CD4-positive, alpha-beta T cell (primary cell): ENCODE measurements at regions of chr19 and their contacts with region 1.

Region 1: GRCh38 chr19:49877020-49877878 is at the starts of genes AKT1S1 and TBC1D17:
- DNase-seq: peak; percentile 95 to 100 (median 98)
- ATAC-seq: peak; percentile 60
- H3K4me3 ChIP-seq: peak within 1 kb of the TSS; percentile 88
- H3K4me3 Mint-ChIP-seq: no peak within 1 kb of the TSS
- H3K27ac ChIP-seq: peak within 1 kb of the TSS; percentile 98 to 100
- H3K27ac Mint-ChIP-seq: no peak within 1 kb of the TSS
- H3K4me1 ChIP-seq: peaks cover 35% of the 10 kb centered on the region
- H3K4me1 Mint-ChIP-seq: peaks cover 18% of the 10 kb centered on the region
- H3K27me3 ChIP-seq: no peaks in the 10 kb centered on the region
- H3K27me3 Mint-ChIP-seq: no peaks in the 10 kb centered on the region
- CTCF ChIP-seq: no peak
- total RNA-seq, gene AKT1S1: 15.1 to 15.8 TPM
- total RNA-seq, gene TBC1D17: 35.5 to 35.8 TPM

Region 2: DNA sequence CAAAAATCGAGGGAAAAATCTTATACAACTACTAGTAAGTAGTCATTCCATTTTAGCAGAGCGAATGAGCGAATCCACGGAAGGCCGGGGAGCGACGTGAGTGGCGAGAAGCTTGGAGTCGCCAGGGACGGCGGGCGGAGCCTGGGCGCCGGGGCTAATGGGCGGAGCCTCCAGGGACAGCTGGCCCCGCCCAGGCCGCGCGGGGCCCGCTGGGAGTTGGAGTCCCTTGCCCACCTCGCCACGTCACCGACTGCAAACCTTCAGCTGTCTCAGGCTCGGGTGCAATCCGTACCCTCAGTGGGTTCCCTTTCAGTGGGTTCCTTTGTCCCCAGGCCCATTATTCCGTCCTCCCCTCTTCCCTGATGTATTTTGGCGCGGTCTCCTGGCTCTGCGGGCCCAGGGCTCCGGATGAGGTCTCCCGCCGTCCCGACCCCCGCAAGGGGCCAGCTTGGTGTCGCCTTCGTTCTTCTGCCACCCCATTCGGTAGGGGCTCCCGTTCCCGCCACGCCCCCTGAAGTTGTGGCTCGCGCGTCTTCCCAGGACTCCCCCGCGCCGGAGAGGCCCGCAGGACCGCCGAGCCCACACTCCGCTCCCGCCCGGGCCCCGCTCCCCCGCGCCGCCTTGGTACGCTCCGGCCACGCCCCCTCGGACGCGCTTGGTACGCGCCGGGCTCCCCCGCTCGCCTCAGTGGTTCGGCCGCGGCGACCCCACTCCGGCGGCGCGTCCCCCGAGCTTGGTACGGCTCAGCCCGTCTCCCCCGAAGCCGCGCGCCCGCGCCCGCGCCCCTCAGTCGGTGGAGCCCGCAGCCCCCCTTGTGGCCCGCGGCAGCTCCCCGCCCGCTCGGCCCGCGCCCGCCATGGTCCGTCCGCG is 26.5 kb before region 1 on chr19 and contains the start of gene PTOV1:
- CTCF ChIA-PET with region 1: no interaction called
- POLR2A ChIA-PET with region 1: interaction called, 57 read pairs
- intact Hi-C with region 1: loop called in 1 of 2 experiments (anchors 1 kb)
- DNase-seq: peak; percentile 77 to 95 (median 84)
- ATAC-seq: peak; percentile 87
- H3K4me3 ChIP-seq: peak within 1 kb of the TSS; percentile 84
- H3K4me3 Mint-ChIP-seq: peak within 1 kb of the TSS; percentile 98
- H3K27ac ChIP-seq: peak within 1 kb of the TSS; percentile 94 to 95
- H3K27ac Mint-ChIP-seq: peak within 1 kb of the TSS; percentile 94
- H3K4me1 ChIP-seq: peaks cover 54% of the 10 kb centered on the region
- H3K4me1 Mint-ChIP-seq: peaks cover 35% of the 10 kb centered on the region
- H3K27me3 ChIP-seq: no peaks in the 10 kb centered on the region
- H3K27me3 Mint-ChIP-seq: no peaks in the 10 kb centered on the region
- CTCF ChIP-seq: no peak
- total RNA-seq, gene PTOV1: 127 to 134 TPM

Region 3: GRCh38 chr19:49889687-49890348 is 12.6 kb after region 1 on chr19:
- CTCF ChIA-PET with region 1: interaction called, 8 read pairs
- POLR2A ChIA-PET with region 1: interaction called, 10 read pairs
- intact Hi-C with region 1: loop called (anchors 1 to 2 kb)
- DNase-seq: peak; percentile 59 to 92 (median 70)
- ATAC-seq: peak; percentile 75
- H3K4me3 ChIP-seq: peak overlapping the region; percentile 66
- H3K4me3 Mint-ChIP-seq: peak overlapping the region; percentile 79
- H3K27ac ChIP-seq: peak overlapping the region in 1 of 2 donors; percentile 21
- H3K27ac Mint-ChIP-seq: no peak overlapping the region
- H3K4me1 ChIP-seq: peaks cover 24% of the 10 kb centered on the region
- H3K4me1 Mint-ChIP-seq: peaks cover 11% of the 10 kb centered on the region
- H3K27me3 ChIP-seq: no peaks in the 10 kb centered on the region
- H3K27me3 Mint-ChIP-seq: no peaks in the 10 kb centered on the region
- CTCF ChIP-seq: peak; percentile 91

Region 4: GRCh38 chr19:49896863-49897621 is 19.8 kb after region 1 on chr19 and contains the start of gene IL4I1:
- CTCF ChIA-PET with region 1: no interaction called
- POLR2A ChIA-PET with region 1: interaction called, 15 read pairs
- intact Hi-C with region 1: no loop called
- DNase-seq: peak; percentile 31 to 94 (median 51)
- ATAC-seq: peak; percentile 71
- H3K4me3 ChIP-seq: peak within 1 kb of the TSS; percentile 48
- H3K4me3 Mint-ChIP-seq: peak within 1 kb of the TSS; percentile 85
- H3K27ac ChIP-seq: peak within 1 kb of the TSS; percentile 80 to 99
- H3K27ac Mint-ChIP-seq: peak within 1 kb of the TSS; percentile 95
- H3K4me1 ChIP-seq: peaks cover 46% of the 10 kb centered on the region
- H3K4me1 Mint-ChIP-seq: peaks cover 37% of the 10 kb centered on the region
- H3K27me3 ChIP-seq: no peaks in the 10 kb centered on the region
- H3K27me3 Mint-ChIP-seq: no peaks in the 10 kb centered on the region
- CTCF ChIP-seq: no peak
- total RNA-seq, gene IL4I1: 4.7 to 5.4 TPM